ENCODE measurements at regions of chr6 and their contacts with region 1.

Region 1: DNA sequence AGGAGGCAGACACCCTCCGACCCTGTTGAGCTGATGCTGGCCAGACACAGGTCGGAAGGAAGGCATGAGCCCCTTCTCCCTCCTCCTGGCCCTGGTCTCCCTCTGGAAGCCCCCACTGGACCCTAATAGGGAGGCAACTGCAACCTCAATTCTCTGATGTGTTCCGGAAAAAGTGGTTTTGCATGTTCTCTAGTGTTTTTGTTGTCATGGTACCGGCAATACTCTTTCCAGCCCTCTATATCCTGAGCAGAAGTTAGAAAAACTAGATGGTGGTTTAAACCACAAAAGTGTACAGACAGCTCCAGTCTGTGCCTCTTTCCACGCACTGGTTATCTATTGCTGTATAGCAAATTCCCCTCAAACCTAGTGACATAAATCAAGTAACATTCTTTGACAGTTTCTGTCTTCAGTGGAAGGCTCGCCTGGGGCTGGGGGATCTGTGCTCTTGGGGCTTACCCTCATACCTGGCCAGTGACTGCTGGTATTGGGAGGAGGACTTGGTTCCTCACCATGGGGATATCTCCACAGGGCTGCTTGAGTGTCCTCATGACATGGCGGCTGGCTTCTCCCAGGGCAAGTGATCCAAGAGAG is 37.0 kb downstream of the SYTL3 start:
- DNase-seq: no peak
- ATAC-seq: no peak
- H3K4me3 ChIP-seq: no peak overlapping the region
- H3K27ac ChIP-seq: no peak overlapping the region
- H3K4me1 ChIP-seq: no peaks in the 10 kb centered on the region
- H3K27me3 ChIP-seq: no peaks in the 10 kb centered on the region

Region 2: DNA sequence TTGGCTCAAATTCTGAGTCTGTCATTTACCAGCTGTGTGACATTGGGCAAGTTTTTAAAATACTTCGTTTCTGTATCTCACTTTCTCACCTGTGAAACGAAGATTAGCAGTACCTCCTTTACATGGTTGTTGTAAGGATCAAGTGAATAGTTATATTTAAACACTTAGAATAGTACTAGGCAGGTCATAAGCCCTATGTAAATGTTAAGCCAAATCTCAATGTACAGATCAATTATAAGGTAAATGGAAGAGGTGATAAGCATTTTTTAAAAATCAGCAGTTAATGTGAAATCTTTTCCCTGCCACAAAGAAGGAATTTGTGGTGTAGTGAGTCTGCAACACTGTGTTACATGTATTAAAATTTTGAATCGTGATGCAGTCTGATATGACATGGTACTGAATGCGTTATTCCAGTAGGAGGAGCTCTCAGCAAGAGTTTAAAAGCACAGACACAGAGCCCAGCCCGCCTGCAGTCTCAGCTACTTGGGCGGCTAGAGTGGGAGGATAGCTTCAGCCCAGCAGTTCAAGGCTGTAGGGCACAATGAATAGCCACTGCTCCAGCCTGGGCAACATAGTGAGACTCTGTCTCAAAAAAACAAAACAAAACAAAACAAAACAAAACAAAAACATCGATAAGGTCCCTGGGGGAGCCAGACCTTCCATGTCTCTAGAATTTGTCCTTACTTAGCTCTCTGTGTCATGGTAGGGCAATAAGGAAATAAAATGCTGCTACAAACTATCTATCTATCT is 472.8 kb before region 1 on chr6:
- intact Hi-C with region 1: loop called in 1 of 2 experiments (anchors 2 kb)
- DNase-seq: peak in 1 of 2 donors; percentile 77
- ATAC-seq: peak; percentile 84
- H3K4me3 ChIP-seq: no peak overlapping the region
- H3K27ac ChIP-seq: no peak overlapping the region
- H3K4me1 ChIP-seq: no peaks in the 10 kb centered on the region
- H3K27me3 ChIP-seq: no peaks in the 10 kb centered on the region

Region 3: GRCh38 chr6:158220786-158221442 is 466.0 kb before region 1 on chr6:
- intact Hi-C with region 1: loop called in 1 of 2 experiments (anchors 2 kb)
- DNase-seq: peak; percentile 83 to 93
- ATAC-seq: peak; percentile 91
- H3K4me3 ChIP-seq: no peak overlapping the region
- H3K27ac ChIP-seq: no peak overlapping the region
- H3K4me1 ChIP-seq: no peaks in the 10 kb centered on the region
- H3K27me3 ChIP-seq: no peaks in the 10 kb centered on the region

Region 4: GRCh38 chr6:158605266-158605878 is 81.5 kb before region 1 on chr6:
- intact Hi-C with region 1: loop called in 1 of 2 experiments (anchors 10 kb)
- DNase-seq: no peak
- ATAC-seq: peak; percentile 73
- H3K4me3 ChIP-seq: no peak overlapping the region
- H3K27ac ChIP-seq: no peak overlapping the region
- H3K4me1 ChIP-seq: no peaks in the 10 kb centered on the region
- H3K27me3 ChIP-seq: no peaks in the 10 kb centered on the region